Activated T-helper 2 cell treated with anti-CD3 and anti-CD28 coated beads, Interferon-gamma antibody, Interleukin-2, Interleukin-4, amounts not matched to agents 10 μg/mL and 5 μg/mL and 100 μg/mL, durations not matched to agents 14 hours and 24 hours and 36 hours (primary cell): ENCODE measurements at regions of chr3 and their contacts with region 1.

Region 1: DNA sequence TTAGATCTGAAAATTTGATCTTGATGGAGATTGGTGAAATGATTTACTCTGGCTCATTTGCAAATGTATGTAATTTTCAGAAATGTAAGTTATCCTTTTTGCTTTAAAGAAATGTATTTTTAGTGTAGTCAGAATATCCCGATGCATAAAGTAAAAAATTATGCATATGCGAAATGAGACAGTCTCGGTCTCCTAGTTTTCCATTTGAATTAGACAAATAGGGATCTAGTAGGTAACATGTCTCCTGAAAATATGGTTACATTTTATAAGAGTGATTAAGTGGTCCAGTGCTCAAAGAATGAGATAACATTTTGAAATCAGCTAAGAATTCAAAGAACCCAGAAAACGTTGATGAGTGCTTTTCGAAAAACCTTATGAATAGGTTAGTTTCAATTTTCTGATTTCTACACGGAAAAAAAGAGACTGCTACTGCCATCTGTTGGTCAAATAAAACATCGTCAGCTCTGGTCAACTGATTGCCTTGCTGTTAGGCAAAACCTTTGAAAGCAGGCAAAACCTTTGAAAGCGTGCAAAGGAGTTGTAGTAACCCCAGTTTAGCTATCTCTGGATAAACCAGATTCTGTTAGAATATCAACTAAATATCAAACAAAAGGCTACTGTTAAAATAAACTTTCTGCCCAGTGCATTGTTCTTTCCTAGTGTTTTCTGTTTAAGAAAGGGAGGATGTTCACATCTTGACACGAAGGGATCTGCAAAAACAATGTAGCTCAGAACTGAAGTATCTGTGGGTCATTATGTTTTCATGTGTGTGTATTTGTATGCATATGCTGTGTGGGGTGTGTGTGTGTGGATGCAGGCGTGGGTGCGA is 59.3 kb upstream of the CHMP2B start:
- DNase-seq: no peak
- H3K4me3 Mint-ChIP-seq: peak overlapping the region; percentile 2
- H3K27ac Mint-ChIP-seq: no peak overlapping the region
- H3K4me1 Mint-ChIP-seq: peaks cover 3% of the 10 kb centered on the region
- H3K27me3 Mint-ChIP-seq: peaks cover 10% of the 10 kb centered on the region

Region 2: GRCh38 chr3:86774082-86774691 is 393.7 kb before region 1 on chr3:
- intact Hi-C with region 1: loop called (anchors 2 kb)
- DNase-seq: no peak
- H3K4me3 Mint-ChIP-seq: no peak overlapping the region
- H3K27ac Mint-ChIP-seq: no peak overlapping the region
- H3K4me1 Mint-ChIP-seq: no peaks in the 10 kb centered on the region
- H3K27me3 Mint-ChIP-seq: no peaks in the 10 kb centered on the region

Region 3: GRCh38 chr3:86937305-86937791 is 230.5 kb before region 1 on chr3:
- intact Hi-C with region 1: no loop called
- DNase-seq: no peak
- H3K4me3 Mint-ChIP-seq: no peak overlapping the region
- H3K27ac Mint-ChIP-seq: no peak overlapping the region
- H3K4me1 Mint-ChIP-seq: no peaks in the 10 kb centered on the region
- H3K27me3 Mint-ChIP-seq: no peaks in the 10 kb centered on the region